ENCODE measurements at regions of chr10 and their contacts with region 1.

Region 1: GRCh38 chr10:31864834-31865518 is 63.7 kb downstream of the ARHGAP12 start:
- DNase-seq: no peak
- H3K4me3 Mint-ChIP-seq: no peak overlapping the region
- H3K27ac Mint-ChIP-seq: no peak overlapping the region
- H3K4me1 Mint-ChIP-seq: peaks cover 10% of the 10 kb centered on the region
- H3K27me3 Mint-ChIP-seq: peaks cover 13% of the 10 kb centered on the region

Region 2: GRCh38 chr10:31928549-31929260 is 63.7 kb after region 1 on chr10 and contains the start of gene ARHGAP12:
- intact Hi-C with region 1: loop called (anchors 5 kb)
- DNase-seq: peak; percentile 66
- H3K4me3 Mint-ChIP-seq: peak within 1 kb of the TSS; percentile 83
- H3K27ac Mint-ChIP-seq: peak within 1 kb of the TSS; percentile 67
- H3K4me1 Mint-ChIP-seq: peaks cover 39% of the 10 kb centered on the region
- H3K27me3 Mint-ChIP-seq: peaks cover 21% of the 10 kb centered on the region
- total RNA-seq, gene ARHGAP12: 2.7 and 3.5 TPM in 2 replicates

Region 3: DNA sequence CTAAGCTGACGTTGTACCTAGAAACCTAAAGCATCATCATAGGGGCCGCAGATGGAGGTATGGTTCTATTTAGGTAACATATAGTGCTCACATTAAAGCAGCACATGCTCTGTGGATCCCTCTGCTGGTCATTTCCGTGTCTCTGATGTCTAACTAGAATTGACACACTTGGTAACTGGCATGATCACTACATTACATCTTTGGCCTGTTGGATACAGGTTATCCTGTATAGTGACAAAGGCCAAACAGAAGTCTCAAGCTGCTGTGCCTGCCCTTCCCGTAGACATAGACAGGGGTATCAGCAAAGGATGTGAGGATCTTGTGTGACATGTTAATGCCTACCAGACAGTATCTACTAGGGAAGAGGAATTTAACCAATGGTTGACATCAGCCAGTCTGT is 140.1 kb after region 1 on chr10:
- intact Hi-C with region 1: loop called (anchors 2 kb)
- DNase-seq: peak; percentile 14
- H3K4me3 Mint-ChIP-seq: no peak overlapping the region
- H3K27ac Mint-ChIP-seq: no peak overlapping the region
- H3K4me1 Mint-ChIP-seq: peaks cover 6% of the 10 kb centered on the region
- H3K27me3 Mint-ChIP-seq: no peaks in the 10 kb centered on the region